ENCODE measurements at regions of chr2 and their contacts with region 1.

Region 1: DNA sequence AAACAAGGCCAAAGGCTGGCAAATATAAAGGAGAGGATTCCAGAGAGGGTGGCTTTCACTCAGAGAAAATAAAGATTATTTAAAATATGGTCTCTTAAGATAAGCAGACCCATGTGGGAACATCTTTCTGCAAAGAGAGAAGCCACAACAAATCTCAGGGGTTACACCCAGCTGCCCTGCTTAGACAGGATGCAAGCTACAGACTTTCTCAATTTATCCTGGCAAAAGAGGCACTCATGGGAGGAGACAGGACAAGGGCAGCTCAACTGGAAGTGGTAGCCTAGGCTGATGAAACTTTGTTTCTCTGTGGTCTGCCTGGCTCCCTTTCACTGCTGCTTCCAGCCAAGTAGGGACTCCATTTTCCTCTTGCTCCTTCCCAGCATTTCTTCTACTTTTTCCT is 25.9 kb upstream of the SULT1C4 start:
- DNase-seq: peak; percentile 11
- H3K4me3 Mint-ChIP-seq: no peak overlapping the region
- H3K27ac Mint-ChIP-seq: no peak overlapping the region
- H3K4me1 Mint-ChIP-seq: peaks cover 6% of the 10 kb centered on the region
- H3K27me3 Mint-ChIP-seq: no peaks in the 10 kb centered on the region
- CTCF ChIP-seq: no peak

Region 2: GRCh38 chr2:108215794-108216211 is 136.1 kb before region 1 on chr2:
- CTCF ChIA-PET with region 1: no interaction called
- POLR2A ChIA-PET with region 1: no interaction called
- intact Hi-C with region 1: loop called (anchors 10 kb)
- DNase-seq: peak; percentile 47
- H3K4me3 Mint-ChIP-seq: no peak overlapping the region
- H3K27ac Mint-ChIP-seq: no peak overlapping the region
- H3K4me1 Mint-ChIP-seq: no peaks in the 10 kb centered on the region
- H3K27me3 Mint-ChIP-seq: no peaks in the 10 kb centered on the region
- CTCF ChIP-seq: peak; percentile 20

Region 3: DNA sequence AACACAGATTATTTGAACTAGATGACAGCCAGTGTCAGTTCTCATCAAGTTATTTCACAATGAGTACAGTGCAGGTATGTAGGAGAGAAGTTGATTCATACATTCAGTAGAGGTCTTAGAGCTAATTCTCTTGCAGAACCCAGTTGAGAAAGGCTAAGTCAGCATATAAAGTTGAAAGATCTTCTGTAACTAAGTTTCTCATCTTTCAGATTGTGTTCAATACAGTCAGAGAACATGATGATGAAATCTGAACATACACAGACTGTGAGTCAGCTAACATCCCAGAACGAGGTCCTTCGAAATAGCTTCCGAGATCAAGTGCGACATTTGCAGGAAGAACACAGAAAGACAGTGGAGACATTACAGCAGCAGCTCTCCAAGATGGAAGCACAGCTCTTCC is 140.5 kb after region 1 on chr2:
- CTCF ChIA-PET with region 1: interaction called, 4 read pairs
- POLR2A ChIA-PET with region 1: no interaction called
- intact Hi-C with region 1: loop called (anchors 5 kb)
- DNase-seq: peak; percentile 90
- H3K4me3 Mint-ChIP-seq: peak overlapping the region; percentile 6
- H3K27ac Mint-ChIP-seq: no peak overlapping the region
- H3K4me1 Mint-ChIP-seq: peaks cover 11% of the 10 kb centered on the region
- H3K27me3 Mint-ChIP-seq: no peaks in the 10 kb centered on the region
- CTCF ChIP-seq: no peak

Region 4: GRCh38 chr2:108719149-108720044 is 367.5 kb after region 1 on chr2 and contains the start of gene RANBP2:
- CTCF ChIA-PET with region 1: no interaction called
- POLR2A ChIA-PET with region 1: no interaction called
- intact Hi-C with region 1: loop called (anchors 5 kb)
- DNase-seq: peak; percentile 95
- H3K4me3 Mint-ChIP-seq: peak within 1 kb of the TSS; percentile 87
- H3K27ac Mint-ChIP-seq: peak within 1 kb of the TSS; percentile 97
- H3K4me1 Mint-ChIP-seq: peaks cover 9% of the 10 kb centered on the region
- H3K27me3 Mint-ChIP-seq: no peaks in the 10 kb centered on the region
- CTCF ChIP-seq: no peak
- total RNA-seq, gene RANBP2: 52.2 and 57.1 TPM in 2 replicates

Measured in MCF 10A (cell line).